Natural killer cell (primary cell): ENCODE measurements at regions of chr18 and their contacts with region 1.

Region 1: GRCh38 chr18:80034068-80034851 is at the start of gene RBFA:
- DNase-seq: peak; percentile 99
- ATAC-seq: peak; percentile 78 to 90 (median 79)
- H3K4me3 ChIP-seq: peak within 1 kb of the TSS; percentile 71
- H3K4me3 Mint-ChIP-seq: peak within 1 kb of the TSS; percentile 95
- H3K27ac ChIP-seq: peak within 1 kb of the TSS; percentile 90
- H3K27ac Mint-ChIP-seq: peak within 1 kb of the TSS; percentile 93 to 98
- H3K4me1 ChIP-seq: peaks cover 15% of the 10 kb centered on the region
- H3K4me1 Mint-ChIP-seq: peaks cover 30% of the 10 kb centered on the region in 2 donors
- H3K27me3 ChIP-seq: no peaks in the 10 kb centered on the region
- H3K27me3 Mint-ChIP-seq: no peaks in the 10 kb centered on the region
- CTCF ChIP-seq: no peak
- total RNA-seq, gene RBFA: 11.9 to 17.7 (median 12.4) TPM

Region 2: DNA sequence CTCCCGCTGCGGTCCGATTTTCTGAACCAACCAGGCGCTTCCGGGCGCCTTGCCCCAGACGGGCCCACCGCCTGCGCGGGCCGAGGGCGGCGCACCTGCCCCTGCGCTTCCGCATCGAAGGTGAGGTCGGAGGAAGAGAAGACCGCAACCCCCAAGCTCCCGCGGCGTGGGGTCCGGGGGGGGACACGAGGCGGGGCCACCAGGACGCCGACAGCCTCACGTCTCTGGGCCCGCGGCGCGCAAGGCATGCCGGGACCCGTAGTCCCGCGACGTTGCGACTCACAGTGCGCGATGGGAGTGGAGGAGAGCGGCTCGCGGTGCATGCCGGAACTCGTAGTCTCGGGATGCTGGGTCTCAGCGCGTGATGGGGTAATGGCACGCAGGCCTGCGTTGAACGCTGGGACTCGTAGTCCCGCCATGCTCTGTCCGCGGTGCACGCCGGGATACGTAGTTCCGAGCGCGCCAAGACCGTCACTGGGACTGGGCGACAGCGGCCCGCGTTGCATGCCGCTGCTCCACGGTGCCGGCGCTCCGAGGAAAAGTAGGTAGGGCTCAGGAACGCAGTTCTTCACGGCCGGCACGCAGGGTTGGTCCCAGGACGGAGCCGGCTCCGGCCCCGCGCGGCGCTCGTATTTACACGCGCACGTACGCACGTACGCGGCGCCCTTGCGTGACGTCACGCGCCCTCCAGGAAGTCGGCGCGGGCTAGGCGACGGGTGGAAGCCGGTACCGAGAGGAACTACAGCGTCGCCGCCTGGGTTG is 355.0 kb before region 1 on chr18 and contains the start of gene CTDP1:
- intact Hi-C with region 1: loop called (anchors 1 kb)
- DNase-seq: peak; percentile 98 to 99
- ATAC-seq: peak; percentile 86 to 95 (median 86)
- H3K4me3 ChIP-seq: peak within 1 kb of the TSS; percentile 100
- H3K4me3 Mint-ChIP-seq: peak within 1 kb of the TSS; percentile 91
- H3K27ac ChIP-seq: peak within 1 kb of the TSS; percentile 100
- H3K27ac Mint-ChIP-seq: peak within 1 kb of the TSS; percentile 96 to 99
- H3K4me1 ChIP-seq: peaks cover 48% of the 10 kb centered on the region
- H3K4me1 Mint-ChIP-seq: peaks cover 46 to 51% of the 10 kb centered on the region in 2 donors
- H3K27me3 ChIP-seq: no peaks in the 10 kb centered on the region
- H3K27me3 Mint-ChIP-seq: no peaks in the 10 kb centered on the region
- CTCF ChIP-seq: no peak
- total RNA-seq, gene CTDP1: 66.9 to 89.4 (median 77.1) TPM

Region 3: DNA sequence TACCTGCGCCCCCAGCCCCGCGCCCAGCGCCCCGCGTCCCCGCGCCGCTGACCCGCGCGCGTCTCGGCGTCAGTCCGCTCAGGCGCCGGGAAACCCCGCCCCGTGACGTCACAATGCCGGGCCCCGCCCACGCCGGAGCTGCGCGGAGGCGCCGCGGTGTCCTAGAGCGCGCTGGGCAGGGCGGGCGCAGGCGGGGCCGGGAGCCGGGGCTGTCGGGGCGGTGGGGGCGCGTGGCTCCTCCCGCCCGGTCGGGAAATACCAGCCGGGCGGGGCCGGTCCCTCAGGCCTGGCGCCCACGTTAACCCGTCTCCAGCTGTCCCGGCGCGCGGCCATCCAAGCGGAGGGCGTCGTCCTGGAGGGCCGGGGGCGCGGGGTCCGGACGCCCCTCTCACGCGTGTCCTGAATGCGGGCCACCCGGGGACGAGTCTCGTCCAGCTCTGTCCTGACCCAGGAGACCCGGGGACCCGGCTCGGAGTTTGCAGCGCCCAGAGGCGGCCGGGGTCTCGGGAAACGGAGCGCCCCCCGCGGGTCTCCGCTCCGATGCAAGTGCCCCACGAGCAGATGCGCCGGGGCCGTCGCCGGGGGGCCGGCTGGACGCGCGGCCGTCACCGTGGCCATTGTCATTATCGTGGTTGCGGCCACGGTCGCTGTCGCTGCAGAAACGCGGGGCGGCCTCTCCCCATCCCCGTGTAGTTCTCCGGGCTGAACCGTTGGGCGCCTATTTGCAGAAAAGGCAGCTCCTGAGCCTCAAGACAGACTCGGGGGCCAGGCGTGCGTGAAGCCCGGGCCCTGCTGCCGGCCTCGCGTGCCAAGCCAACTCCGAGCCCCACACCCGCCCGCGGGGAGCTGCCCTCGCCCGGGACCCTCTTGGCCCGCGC is 82.4 kb before region 1 on chr18 and contains the start of gene SLC66A2:
- intact Hi-C with region 1: loop called (anchors 5 kb)
- DNase-seq: peak; percentile 94 to 97
- ATAC-seq: peak; percentile 89 to 96 (median 92)
- H3K4me3 ChIP-seq: peak within 1 kb of the TSS; percentile 56
- H3K4me3 Mint-ChIP-seq: peak within 1 kb of the TSS; percentile 90
- H3K27ac ChIP-seq: no peak within 1 kb of the TSS
- H3K27ac Mint-ChIP-seq: peak within 1 kb of the TSS; percentile 76 to 79
- H3K4me1 ChIP-seq: peaks cover 29% of the 10 kb centered on the region
- H3K4me1 Mint-ChIP-seq: peaks cover 21 to 30% of the 10 kb centered on the region in 2 donors
- H3K27me3 ChIP-seq: no peaks in the 10 kb centered on the region
- H3K27me3 Mint-ChIP-seq: no peaks in the 10 kb centered on the region
- CTCF ChIP-seq: no peak
- total RNA-seq, gene SLC66A2: 51.2 to 62.4 (median 54.1) TPM

Region 4: GRCh38 chr18:79988451-79989194 is 45.6 kb before region 1 on chr18 and contains the start of gene TXNL4A:
- intact Hi-C with region 1: loop called (anchors 1 kb)
- DNase-seq: peak; percentile 83 to 95
- ATAC-seq: peak; percentile 91 to 97 (median 92)
- H3K4me3 ChIP-seq: peak within 1 kb of the TSS; percentile 80
- H3K4me3 Mint-ChIP-seq: peak within 1 kb of the TSS; percentile 97
- H3K27ac ChIP-seq: peak within 1 kb of the TSS; percentile 90
- H3K27ac Mint-ChIP-seq: peak within 1 kb of the TSS; percentile 90 to 94
- H3K4me1 ChIP-seq: peaks cover 24% of the 10 kb centered on the region
- H3K4me1 Mint-ChIP-seq: peaks cover 32 to 33% of the 10 kb centered on the region in 2 donors
- H3K27me3 ChIP-seq: no peaks in the 10 kb centered on the region
- H3K27me3 Mint-ChIP-seq: peaks cover 0 to 2% of the 10 kb centered on the region in 2 donors
- CTCF ChIP-seq: no peak
- total RNA-seq, gene TXNL4A: 63.2 to 69.1 (median 66.4) TPM

Region 5: GRCh38 chr18:80108728-80109675 is 74.7 kb after region 1 on chr18 and contains the start of gene ADNP2:
- intact Hi-C with region 1: loop called (anchors 5 kb)
- DNase-seq: peak; percentile 79 to 95
- ATAC-seq: peak; percentile 82 to 87 (median 83)
- H3K4me3 ChIP-seq: peak within 1 kb of the TSS; percentile 67
- H3K4me3 Mint-ChIP-seq: peak within 1 kb of the TSS; percentile 84
- H3K27ac ChIP-seq: peak within 1 kb of the TSS; percentile 100
- H3K27ac Mint-ChIP-seq: peak within 1 kb of the TSS; percentile 10 to 92
- H3K4me1 ChIP-seq: peaks cover 17% of the 10 kb centered on the region
- H3K4me1 Mint-ChIP-seq: peaks cover 11 to 25% of the 10 kb centered on the region in 2 donors
- H3K27me3 ChIP-seq: no peaks in the 10 kb centered on the region
- H3K27me3 Mint-ChIP-seq: peaks cover 0 to 3% of the 10 kb centered on the region in 2 donors
- CTCF ChIP-seq: no peak
- total RNA-seq, gene ADNP2: 31.2 to 39.2 (median 31.4) TPM